ENCODE measurements at regions of chr11 and their contacts with region 1.

Region 1: DNA sequence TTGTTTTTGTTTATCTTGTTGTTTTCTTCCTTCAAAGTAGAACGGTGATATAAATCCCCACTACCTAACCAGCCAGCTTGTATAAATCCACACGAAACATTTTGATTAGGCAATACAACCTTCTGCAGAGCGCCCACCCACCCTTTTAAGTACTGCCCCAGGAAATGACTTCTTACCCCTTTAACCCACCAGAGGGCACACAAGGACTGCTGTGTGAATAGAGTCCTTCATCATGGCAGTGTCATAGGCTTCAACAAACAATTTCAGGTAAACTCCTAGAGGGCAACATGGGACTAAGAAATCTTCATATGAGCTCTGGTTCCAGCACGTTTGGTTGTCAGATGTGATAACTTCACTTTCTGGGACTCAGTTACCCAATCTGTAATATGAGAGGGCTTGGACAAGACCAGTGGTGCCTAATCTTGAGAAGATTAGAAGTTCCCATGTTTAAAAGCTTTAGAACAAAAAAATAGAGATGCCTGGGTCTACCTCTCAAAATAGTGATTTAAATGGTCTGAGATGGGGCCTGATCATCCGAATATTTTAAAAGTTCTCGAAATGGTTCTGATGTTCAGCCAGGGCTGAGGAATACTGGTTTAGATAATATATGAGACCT is 56.1 kb downstream of the PIWIL4 start:
- DNase-seq: peak; percentile 89
- H3K4me3 ChIP-seq: no peak overlapping the region
- H3K27ac ChIP-seq: no peak overlapping the region
- H3K4me1 ChIP-seq: no peaks in the 10 kb centered on the region
- H3K27me3 ChIP-seq: no peaks in the 10 kb centered on the region
- CTCF ChIP-seq: peak; percentile 58 to 72
- POLR2A ChIP-seq: no peak

Region 2: GRCh38 chr11:94741022-94741679 is 117.9 kb after region 1 on chr11:
- CTCF ChIA-PET with region 1: interaction called, 26 read pairs
- POLR2A ChIA-PET with region 1: no interaction called
- dilution Hi-C with region 1: no loop called
- intact Hi-C with region 1: loop called (anchors 1 kb)
- DNase-seq: peak; percentile 73
- H3K4me3 ChIP-seq: peak overlapping the region; percentile 52 to 71 (median 63)
- H3K27ac ChIP-seq: no peak overlapping the region
- H3K4me1 ChIP-seq: peaks cover 22% of the 10 kb centered on the region
- H3K27me3 ChIP-seq: no peaks in the 10 kb centered on the region
- CTCF ChIP-seq: peak; percentile 30 to 42
- POLR2A ChIP-seq: no peak

Region 3: GRCh38 chr11:94767761-94768601 is 144.8 kb after region 1 on chr11 and contains the start of gene AMOTL1:
- CTCF ChIA-PET with region 1: interaction called, 83 read pairs
- POLR2A ChIA-PET with region 1: no interaction called
- dilution Hi-C with region 1: no loop called
- intact Hi-C with region 1: loop called (anchors 1 kb)
- DNase-seq: peak; percentile 85
- H3K4me3 ChIP-seq: peak within 1 kb of the TSS; percentile 55 to 76 (median 73)
- H3K27ac ChIP-seq: peak within 1 kb of the TSS; percentile 85
- H3K4me1 ChIP-seq: peaks cover 19% of the 10 kb centered on the region
- H3K27me3 ChIP-seq: no peaks in the 10 kb centered on the region
- CTCF ChIP-seq: no peak
- POLR2A ChIP-seq: peak; percentile 77
- total RNA-seq, gene AMOTL1: 37.8 and 41.8 TPM in 2 replicates

Region 4: GRCh38 chr11:94845622-94846021 is 222.4 kb after region 1 on chr11:
- CTCF ChIA-PET with region 1: interaction called, 10 read pairs
- POLR2A ChIA-PET with region 1: no interaction called
- dilution Hi-C with region 1: no loop called
- intact Hi-C with region 1: no loop called
- DNase-seq: no peak
- H3K4me3 ChIP-seq: no peak overlapping the region
- H3K27ac ChIP-seq: no peak overlapping the region
- H3K4me1 ChIP-seq: no peaks in the 10 kb centered on the region
- H3K27me3 ChIP-seq: no peaks in the 10 kb centered on the region
- CTCF ChIP-seq: no peak
- POLR2A ChIP-seq: no peak

Region 5: DNA sequence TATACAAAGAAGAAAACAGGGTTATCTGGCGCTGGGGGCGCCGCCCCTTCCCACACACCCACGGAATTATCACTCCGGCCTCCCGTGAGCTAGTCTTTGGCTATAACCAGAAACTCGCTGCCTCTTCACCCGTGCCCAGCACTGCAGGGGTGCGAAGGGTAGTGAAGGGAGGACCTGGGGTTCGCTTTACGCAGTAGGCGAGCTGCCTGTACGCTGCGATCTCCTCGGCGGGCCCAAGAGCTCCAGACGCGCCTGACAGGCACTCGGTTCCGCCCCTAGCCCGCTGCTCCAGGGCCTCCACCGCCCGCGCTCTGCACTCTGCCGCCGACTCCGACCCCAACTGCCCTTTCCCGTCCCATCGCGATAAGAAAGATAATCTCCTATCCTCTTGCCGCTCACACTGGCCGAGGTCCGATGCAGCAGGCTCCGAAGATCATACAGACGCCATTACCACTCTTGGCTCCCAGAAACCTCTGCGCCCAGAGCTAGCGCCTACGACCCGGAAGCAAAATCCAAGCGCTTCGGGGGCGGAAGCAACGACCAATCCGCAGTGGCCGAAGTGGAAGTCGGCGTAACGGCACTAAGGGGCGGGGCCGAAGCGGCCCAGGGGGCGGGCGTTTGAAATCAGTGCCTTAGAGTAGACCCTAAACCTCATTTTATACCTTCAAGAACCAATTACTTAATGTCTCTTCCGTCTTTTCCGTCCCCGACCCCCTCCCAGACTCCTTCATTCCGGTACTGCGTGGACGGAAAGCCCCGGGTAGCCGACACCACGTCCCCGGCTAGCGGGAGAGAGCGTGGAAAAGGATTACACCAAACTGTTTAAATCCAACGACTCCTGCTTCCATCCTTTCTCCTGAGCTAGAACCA is 350.1 kb after region 1 on chr11 and contains the starts of genes CWC15 and KDM4D:
- CTCF ChIA-PET with region 1: interaction called, 56 read pairs
- POLR2A ChIA-PET with region 1: no interaction called
- dilution Hi-C with region 1: no loop called
- intact Hi-C with region 1: loop called (anchors 1 kb)
- DNase-seq: peak; percentile 95
- H3K4me3 ChIP-seq: peak within 1 kb of the TSS; percentile 77 to 94 (median 92)
- H3K27ac ChIP-seq: peak within 1 kb of the TSS; percentile 76
- H3K4me1 ChIP-seq: peaks cover 9% of the 10 kb centered on the region
- H3K27me3 ChIP-seq: no peaks in the 10 kb centered on the region
- CTCF ChIP-seq: no peak
- POLR2A ChIP-seq: peak; percentile 91
- total RNA-seq, gene CWC15: 72.0 and 75.6 TPM in 2 replicates
- total RNA-seq, gene KDM4D: 1.0 and 1.3 TPM in 2 replicates

Region 6: DNA sequence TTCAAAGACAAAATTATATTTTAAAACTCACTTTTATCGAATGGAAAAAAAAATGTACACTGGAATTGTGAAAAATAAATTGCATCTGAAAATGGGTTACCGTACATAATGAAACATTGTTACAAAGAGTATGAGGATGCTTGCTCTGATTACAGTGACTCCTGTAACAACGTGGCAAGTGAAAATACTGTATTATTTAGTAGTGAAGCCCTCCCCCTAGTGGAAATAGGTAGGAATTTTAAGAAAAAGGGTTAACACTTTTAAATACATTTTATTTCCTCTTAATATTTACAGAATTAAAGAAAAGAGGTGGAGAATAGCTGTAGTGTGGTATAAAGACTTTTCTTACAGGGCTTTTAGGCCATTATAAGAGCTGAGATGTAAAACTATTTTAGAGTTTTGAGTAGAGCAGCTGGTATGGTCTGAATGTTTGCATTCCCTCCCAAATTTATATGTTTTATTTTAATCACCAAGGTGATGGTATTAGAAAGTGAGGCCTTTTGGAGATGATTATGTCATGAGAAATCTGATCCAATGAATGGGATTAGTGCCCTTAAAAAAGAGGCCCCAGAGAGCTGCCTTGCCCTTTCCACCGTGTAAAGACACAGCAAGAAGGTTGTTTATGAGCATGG is 1141.2 kb after region 1 on chr11:
- CTCF ChIA-PET with region 1: no interaction called
- POLR2A ChIA-PET with region 1: no interaction called
- dilution Hi-C with region 1: no loop called
- intact Hi-C with region 1: loop called (anchors 1 kb)
- DNase-seq: peak; percentile 70
- H3K4me3 ChIP-seq: no peak overlapping the region
- H3K27ac ChIP-seq: no peak overlapping the region
- H3K4me1 ChIP-seq: no peaks in the 10 kb centered on the region
- H3K27me3 ChIP-seq: peaks cover 5 to 6% of the 10 kb centered on the region in 2 experiments
- CTCF ChIP-seq: peak; percentile 33 to 37
- POLR2A ChIP-seq: no peak